HepG2 (cell line): ENCODE measurements at regions of chr11 and their contacts with region 1.

Region 1: GRCh38 chr11:14619603-14620531 is 23.7 kb upstream of the PDE3B start:
- DNase-seq: peak; percentile 93
- ATAC-seq: peak; percentile 96
- H3K4me3 ChIP-seq: no peak overlapping the region; a peak in 2 of 6 replicates
- H3K27ac ChIP-seq: peak overlapping the region; percentile 75
- H3K4me1 ChIP-seq: peaks cover 47% of the 10 kb centered on the region
- H3K27me3 ChIP-seq: no peaks in the 10 kb centered on the region
- CTCF ChIP-seq: no peak
- EP300 ChIP-seq: peak in 1 of 2 experiments; percentile 80; a peak in 2 of 4 replicates
- POLR2A ChIP-seq: no peak
- RAD21 ChIP-seq: no peak

Region 2: GRCh38 chr11:14544611-14545010 is 75.3 kb before region 1 on chr11:
- CTCF ChIA-PET with region 1: no interaction called
- POLR2A ChIA-PET with region 1: no interaction called
- in situ Hi-C with region 1: loop called (anchors 25 kb)
- intact Hi-C with region 1: loop called (anchors 5 kb)
- DNase-seq: no peak
- ATAC-seq: no peak
- H3K4me3 ChIP-seq: no peak overlapping the region
- H3K27ac ChIP-seq: no peak overlapping the region
- H3K4me1 ChIP-seq: peaks cover 28% of the 10 kb centered on the region
- H3K27me3 ChIP-seq: no peaks in the 10 kb centered on the region
- CTCF ChIP-seq: no peak
- EP300 ChIP-seq: no peak
- POLR2A ChIP-seq: no peak
- RAD21 ChIP-seq: no peak

Region 3: DNA sequence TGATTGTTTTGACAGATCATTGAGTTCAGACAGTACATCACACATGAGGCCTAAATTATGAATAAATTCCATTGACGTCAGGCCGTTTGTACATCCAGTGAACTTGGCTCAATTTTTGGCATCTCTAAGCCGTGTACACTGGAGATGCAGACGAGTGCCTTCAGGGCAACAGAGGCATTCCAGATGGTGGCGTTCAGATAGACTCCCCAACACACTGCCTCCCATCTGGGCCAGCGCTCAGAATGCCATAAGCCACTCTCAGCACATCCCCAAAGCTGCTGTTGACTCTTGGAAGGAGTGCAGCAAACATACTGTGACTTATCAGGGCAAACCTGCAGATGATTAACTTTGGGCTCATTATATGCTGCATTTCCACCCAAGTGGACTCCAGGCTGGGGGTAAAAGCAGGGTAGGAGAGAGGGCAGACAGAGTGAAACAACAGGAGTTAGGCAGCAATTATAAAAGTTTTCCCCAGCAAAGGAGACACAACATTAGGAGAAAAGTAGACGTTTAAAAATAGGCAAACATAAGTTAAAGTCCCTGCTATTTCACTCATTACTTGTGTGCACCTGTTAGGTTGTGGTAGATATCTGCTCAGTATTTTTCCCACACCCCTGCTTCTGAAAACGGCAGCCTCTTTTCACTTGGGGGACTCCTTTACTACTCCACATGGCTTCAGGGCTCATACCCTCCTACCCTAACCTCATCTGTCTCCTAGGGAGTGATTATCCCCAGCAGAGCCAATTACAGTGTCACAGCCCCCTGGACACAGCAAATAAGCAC is 36.4 kb before region 1 on chr11:
- CTCF ChIA-PET with region 1: no interaction called
- POLR2A ChIA-PET with region 1: interaction called, 5 read pairs
- in situ Hi-C with region 1: no loop called
- intact Hi-C with region 1: loop called (anchors 5 kb)
- DNase-seq: peak; percentile 85
- ATAC-seq: peak; percentile 97
- H3K4me3 ChIP-seq: peak overlapping the region in 1 of 3 experiments; percentile 29; a peak in 1 of 6 replicates
- H3K27ac ChIP-seq: peak overlapping the region; percentile 72
- H3K4me1 ChIP-seq: peaks cover 51% of the 10 kb centered on the region
- H3K27me3 ChIP-seq: no peaks in the 10 kb centered on the region
- CTCF ChIP-seq: no peak
- EP300 ChIP-seq: peak in 1 of 2 experiments; percentile 39; a peak in 1 of 4 replicates
- POLR2A ChIP-seq: peak in 1 of 2 experiments; percentile 47; a peak in 2 of 4 replicates
- RAD21 ChIP-seq: no peak

Region 4: DNA sequence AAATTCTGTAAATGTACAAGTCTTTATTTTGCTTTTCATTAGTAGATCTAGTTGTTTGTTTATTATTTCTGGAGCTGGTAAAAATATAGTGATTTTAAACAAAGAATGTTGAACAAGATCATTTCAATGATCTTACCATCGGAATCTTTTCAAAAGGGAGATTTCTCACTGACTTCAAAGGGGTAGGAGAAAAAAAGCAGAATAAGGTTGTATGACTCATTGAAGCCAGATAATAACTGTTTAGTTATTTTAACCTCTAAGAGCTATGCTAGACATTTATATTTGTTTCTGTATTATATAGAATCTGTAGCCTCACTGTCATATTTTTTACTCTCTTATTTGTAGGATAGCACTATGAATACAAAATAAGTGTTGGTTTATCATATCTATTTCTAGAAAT is 15.7 kb after region 1 on chr11:
- CTCF ChIA-PET with region 1: no interaction called
- POLR2A ChIA-PET with region 1: no interaction called
- in situ Hi-C with region 1: no loop called
- intact Hi-C with region 1: loop called (anchors 1 kb)
- DNase-seq: no peak
- ATAC-seq: no peak
- H3K4me3 ChIP-seq: no peak overlapping the region
- H3K27ac ChIP-seq: no peak overlapping the region
- H3K4me1 ChIP-seq: peaks cover 13% of the 10 kb centered on the region
- H3K27me3 ChIP-seq: no peaks in the 10 kb centered on the region
- CTCF ChIP-seq: no peak
- EP300 ChIP-seq: no peak
- POLR2A ChIP-seq: no peak
- RAD21 ChIP-seq: no peak